Dorsolateral prefrontal cortex (tissue), 120 donors: ENCODE measurements at regions of chr4 and their contacts with region 1.

Region 1: GRCh38 chr4:8594097-8595038 is 1.8 kb downstream of the CPZ start:
- DNase-seq: peak in 4 of 10 donors; percentile 20 to 46 (median 34)
- H3K4me3 ChIP-seq: peak overlapping the region in 2 of 59 donors; percentile 30 to 47
- H3K27ac ChIP-seq: no peak overlapping the region
- H3K27me3 ChIP-seq: peaks cover 0 to 39% (median 27%) of the 10 kb centered on the region in 45 donors
- CTCF ChIP-seq: peak in 55 of 56 donors; percentile 48 to 79 (median 66)

Region 2: DNA sequence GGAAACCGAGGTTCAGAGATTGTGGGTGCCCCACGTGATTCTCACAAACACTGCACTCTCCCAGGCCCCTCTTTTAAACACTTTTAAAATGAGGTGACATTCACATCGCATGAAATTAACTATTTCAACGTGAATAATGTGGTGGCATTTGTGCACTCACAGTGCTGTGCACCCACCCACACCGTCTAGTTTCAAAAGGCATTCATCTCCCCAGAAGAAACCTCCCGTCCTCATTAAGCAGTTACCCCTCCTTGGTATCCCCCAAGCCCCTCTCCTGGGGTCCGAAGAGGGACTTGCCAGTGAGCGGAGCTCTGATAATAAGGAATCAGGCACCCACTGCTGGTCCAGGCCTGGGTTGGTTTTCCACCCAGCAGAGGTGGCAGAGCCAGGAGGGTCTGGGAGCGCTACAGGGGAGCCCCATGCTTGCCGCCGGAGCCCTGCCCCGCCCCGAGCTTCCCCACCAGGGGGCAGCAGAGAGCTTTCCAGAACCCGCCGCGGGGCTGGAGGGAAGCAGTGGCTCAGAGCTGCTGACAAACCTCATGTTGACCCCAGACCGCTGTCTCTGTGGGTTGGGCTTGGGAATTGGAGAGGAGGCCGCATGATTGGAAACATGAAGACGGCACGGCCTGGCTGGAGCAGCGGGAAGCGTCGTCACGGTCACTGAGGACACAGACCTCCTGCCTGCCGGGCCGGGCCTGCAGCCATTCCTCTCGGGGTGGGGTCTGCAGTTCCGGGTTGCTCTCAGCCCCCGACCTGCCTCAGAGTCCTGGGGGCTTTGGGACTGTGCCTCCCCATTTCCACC is 352.3 kb before region 1 on chr4:
- intact Hi-C with region 1: loop called (anchors 2 to 10 kb)
- DNase-seq: peak in 9 of 10 donors; percentile 67 to 89 (median 76)
- H3K4me3 ChIP-seq: no peak overlapping the region
- H3K27ac ChIP-seq: peak overlapping the region in 4 of 59 donors; percentile 9 to 46 (median 24)
- H3K27me3 ChIP-seq: no peaks in the 10 kb centered on the region
- CTCF ChIP-seq: peak; percentile 93 to 100 (median 98)

Region 3: GRCh38 chr4:8468746-8469535 is 125.4 kb before region 1 on chr4:
- intact Hi-C with region 1: loop called (anchors 2 kb)
- DNase-seq: peak in 9 of 10 donors; percentile 43 to 81 (median 66)
- H3K4me3 ChIP-seq: no peak overlapping the region
- H3K27ac ChIP-seq: no peak overlapping the region
- H3K27me3 ChIP-seq: no peaks in the 10 kb centered on the region
- CTCF ChIP-seq: peak; percentile 64 to 95 (median 87)